GM12878 (cell line): ENCODE measurements at regions of chr10 and their contacts with region 1.

Region 1: GRCh38 chr10:101050208-101051069 is 11.3 kb upstream of the KAZALD1 start:
- DNase-seq: no peak
- ATAC-seq: peak; percentile 97
- H3K4me3 ChIP-seq: peak overlapping the region; percentile 56; the same call in 1 of the 2 replicates
- H3K27ac ChIP-seq: no peak overlapping the region
- H3K4me1 ChIP-seq: peaks cover 8% of the 10 kb centered on the region
- H3K27me3 ChIP-seq: peaks cover 0 to 1% of the 10 kb centered on the region in 2 experiments; a peak in 2 of 4 replicates
- CTCF ChIP-seq: peak; percentile 85 to 88 (median 87)
- EP300 ChIP-seq: no peak
- POLR2A ChIP-seq: no peak
- RAD21 ChIP-seq: peak; percentile 65

Region 2: GRCh38 chr10:100858261-100858660 is 192.2 kb before region 1 on chr10:
- CTCF ChIA-PET with region 1: no interaction called
- POLR2A ChIA-PET with region 1: no interaction called
- RAD21 ChIA-PET with region 1: no interaction called
- SMC1A ChIA-PET with region 1: no interaction called
- in situ Hi-C with region 1: no loop called
- intact Hi-C with region 1: no loop called
- DNase-seq: no peak
- ATAC-seq: no peak
- H3K4me3 ChIP-seq: no peak overlapping the region
- H3K27ac ChIP-seq: no peak overlapping the region
- H3K4me1 ChIP-seq: no peaks in the 10 kb centered on the region
- H3K27me3 ChIP-seq: peaks cover 2 to 4% of the 10 kb centered on the region in 2 experiments; a peak in 3 of 4 replicates
- CTCF ChIP-seq: no peak
- EP300 ChIP-seq: no peak
- POLR2A ChIP-seq: no peak
- RAD21 ChIP-seq: no peak

Region 3: DNA sequence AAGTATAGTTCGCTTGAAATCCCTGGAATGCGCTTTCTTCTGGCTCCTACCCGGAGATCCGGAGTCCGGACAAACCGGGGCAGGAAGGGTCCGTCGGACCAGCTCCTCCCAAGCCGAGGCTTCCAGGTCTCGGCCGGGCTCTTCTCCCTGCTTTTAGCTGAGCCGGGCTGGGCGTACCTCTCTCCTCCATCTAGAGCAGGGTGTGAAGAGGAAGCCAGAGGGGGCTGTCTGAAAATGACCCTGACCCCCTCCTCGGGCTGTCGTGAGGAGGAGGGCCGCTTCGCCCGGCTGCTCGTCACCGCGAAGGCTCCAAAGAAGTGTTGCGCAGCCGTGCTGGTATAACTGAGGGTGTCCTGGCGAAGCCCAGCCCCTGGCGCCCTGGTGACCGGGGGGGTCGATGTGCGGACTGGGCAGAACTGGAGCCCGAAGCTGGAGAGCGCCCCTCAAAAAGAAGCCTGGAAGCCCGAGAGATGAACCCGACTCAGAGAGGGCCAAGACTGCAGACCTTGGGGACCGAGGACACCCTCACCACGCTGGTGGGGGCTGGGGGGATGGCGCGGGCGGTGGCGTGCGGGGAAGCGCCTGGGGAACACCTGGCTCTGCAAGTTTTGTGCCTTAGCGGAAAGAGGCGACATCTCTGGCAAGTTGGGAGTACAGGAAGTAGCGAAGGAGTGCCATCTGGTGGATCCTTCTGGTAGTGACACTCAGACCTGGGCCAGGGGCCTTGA is 17.1 kb after region 1 on chr10:
- CTCF ChIA-PET with region 1: interaction called, 885 read pairs
- POLR2A ChIA-PET with region 1: interaction called, 30 read pairs
- RAD21 ChIA-PET with region 1: interaction called, 44 read pairs
- SMC1A ChIA-PET with region 1: interaction called, 30 read pairs
- in situ Hi-C with region 1: no loop called
- intact Hi-C with region 1: no loop called
- DNase-seq: peak; percentile 44
- ATAC-seq: peak; percentile 74
- H3K4me3 ChIP-seq: peak overlapping the region; percentile 87
- H3K27ac ChIP-seq: no peak overlapping the region
- H3K4me1 ChIP-seq: peaks cover 41% of the 10 kb centered on the region
- H3K27me3 ChIP-seq: peaks cover 2 to 3% of the 10 kb centered on the region in 2 experiments; a peak in 1 of 4 replicates
- CTCF ChIP-seq: peak; percentile 81 to 89 (median 82)
- EP300 ChIP-seq: no peak
- POLR2A ChIP-seq: no peak
- RAD21 ChIP-seq: peak; percentile 73